ENCODE measurements at regions of chr5 and their contacts with region 1.

Region 1: DNA sequence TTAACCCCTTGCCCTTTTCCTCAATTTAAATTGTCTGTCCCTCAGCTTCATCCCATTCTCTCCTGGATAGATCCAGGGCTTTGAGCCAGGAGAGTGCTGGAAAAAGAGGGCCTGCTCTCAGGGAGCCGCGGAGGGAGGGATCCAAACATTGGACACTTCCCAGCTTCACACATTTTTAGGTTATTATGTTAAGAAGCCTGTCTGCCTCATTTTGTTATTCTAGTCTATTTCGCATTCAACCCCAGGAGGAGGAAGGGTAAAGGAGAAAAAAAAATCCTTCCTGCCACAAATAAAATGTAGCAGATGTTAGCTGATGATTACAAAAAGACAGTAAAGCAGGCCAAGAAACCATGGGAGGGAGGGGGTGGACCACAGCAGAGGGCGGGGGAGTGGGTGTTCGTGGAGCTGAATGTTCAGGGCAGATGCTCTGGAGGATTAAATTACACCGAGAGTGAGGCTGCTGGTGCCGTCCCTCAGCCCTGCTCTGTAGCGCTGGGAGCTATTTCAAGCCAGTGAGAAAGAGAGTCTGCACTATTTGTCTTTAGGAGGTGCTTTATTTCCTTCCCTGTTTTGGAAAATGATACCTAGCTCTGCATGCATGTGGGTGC is 60.6 kb upstream of the ZFR start:
- DNase-seq: no peak
- ATAC-seq: no peak
- H3K4me3 ChIP-seq: no peak overlapping the region
- H3K27ac ChIP-seq: no peak overlapping the region; the same call in 1 of the 2 replicates
- H3K4me1 ChIP-seq: peaks cover 45% of the 10 kb centered on the region
- H3K27me3 ChIP-seq: no peaks in the 10 kb centered on the region
- CTCF ChIP-seq: no peak

Region 2: GRCh38 chr5:31982621-31983020 is 522.5 kb before region 1 on chr5:
- CTCF ChIA-PET with region 1: no interaction called
- POLR2A ChIA-PET with region 1: no interaction called
- intact Hi-C with region 1: no loop called
- DNase-seq: peak; percentile 64
- ATAC-seq: peak; percentile 79
- H3K4me3 ChIP-seq: no peak overlapping the region; the same call in 1 of the 2 replicates
- H3K27ac ChIP-seq: no peak overlapping the region
- H3K4me1 ChIP-seq: peaks cover 14% of the 10 kb centered on the region
- H3K27me3 ChIP-seq: no peaks in the 10 kb centered on the region
- CTCF ChIP-seq: no peak

Region 3: DNA sequence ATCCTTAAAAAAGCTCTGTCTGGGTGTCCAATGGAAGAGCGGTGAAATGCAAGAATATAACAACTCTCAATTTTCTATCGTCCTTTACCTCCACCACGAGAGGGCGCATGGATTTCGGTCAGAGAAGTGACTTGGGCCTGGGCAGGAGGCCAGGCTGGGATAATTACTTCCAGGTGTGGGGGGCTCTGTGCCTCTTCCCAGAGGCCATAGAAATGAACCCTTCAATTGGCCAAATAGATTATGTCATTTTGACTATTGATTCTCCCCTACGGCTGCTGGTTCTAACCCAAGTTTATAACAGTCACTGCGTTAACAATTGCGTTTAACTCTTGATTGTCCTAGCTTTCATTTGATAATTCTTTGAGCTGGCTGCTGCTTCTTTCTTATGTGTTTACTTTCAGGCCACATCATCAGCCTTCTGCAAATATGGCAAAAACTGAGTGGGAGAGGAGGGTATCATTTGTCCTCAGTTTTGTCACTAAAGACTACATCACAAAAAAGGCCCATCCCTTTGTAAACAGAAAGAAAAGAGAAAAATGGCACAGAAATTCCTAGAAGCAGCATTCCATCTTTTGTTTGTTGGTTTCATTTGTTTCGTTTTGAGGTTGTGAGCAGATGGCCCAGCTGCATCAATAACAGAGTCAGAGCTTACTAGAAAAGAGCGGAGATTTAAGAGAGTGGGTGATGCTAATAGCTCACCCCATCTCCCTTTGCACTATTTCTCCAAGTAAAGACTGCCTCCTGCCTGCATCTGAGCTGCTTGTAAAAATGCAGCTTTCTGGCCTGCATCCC is 15.1 kb before region 1 on chr5:
- CTCF ChIA-PET with region 1: interaction called, 6 read pairs
- POLR2A ChIA-PET with region 1: no interaction called
- intact Hi-C with region 1: loop called (anchors 2 kb)
- DNase-seq: peak; percentile 86
- ATAC-seq: peak; percentile 88
- H3K4me3 ChIP-seq: peak overlapping the region; percentile 9; the same call in 1 of the 2 replicates
- H3K27ac ChIP-seq: peak overlapping the region; percentile 53
- H3K4me1 ChIP-seq: peaks cover 14% of the 10 kb centered on the region
- H3K27me3 ChIP-seq: no peaks in the 10 kb centered on the region
- CTCF ChIP-seq: peak; percentile 91

Measured in PC-3 (cell line).